Dendritic cell treated with granulocyte-macrophage colony-stimulating factor and Interleukin-4, amounts not matched to agents 40 ng/mL and 50 ng/mL, for 4 days (primary cell): ENCODE measurements at regions of chr15 and their contacts with region 1.

Region 1: DNA sequence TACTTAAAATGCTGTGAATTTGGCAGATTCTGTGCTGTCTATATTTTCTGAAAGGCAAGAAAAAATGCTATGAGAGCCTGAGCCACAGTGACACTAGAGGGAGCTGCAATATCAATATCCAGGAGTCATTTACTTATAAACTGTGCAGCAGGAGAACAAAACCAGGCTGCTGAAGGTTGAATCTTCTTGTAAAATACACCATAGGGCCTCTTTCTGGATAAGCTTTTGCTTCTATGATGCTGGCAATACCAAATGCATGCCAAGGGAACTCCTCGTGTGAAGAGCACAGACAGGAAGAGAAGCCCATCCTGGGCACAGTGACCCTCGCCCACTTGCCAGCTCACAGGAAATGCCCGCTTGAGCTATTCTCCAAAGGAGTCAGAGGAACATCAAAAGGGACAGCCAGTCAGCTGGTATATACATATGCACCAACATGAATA is 48.0 kb upstream of the TSPAN3 start:
- H3K4me3 Mint-ChIP-seq: no peak overlapping the region
- H3K27ac Mint-ChIP-seq: no peak overlapping the region
- H3K4me1 Mint-ChIP-seq: peaks cover 6% of the 10 kb centered on the region
- H3K27me3 Mint-ChIP-seq: no peaks in the 10 kb centered on the region

Region 2: DNA sequence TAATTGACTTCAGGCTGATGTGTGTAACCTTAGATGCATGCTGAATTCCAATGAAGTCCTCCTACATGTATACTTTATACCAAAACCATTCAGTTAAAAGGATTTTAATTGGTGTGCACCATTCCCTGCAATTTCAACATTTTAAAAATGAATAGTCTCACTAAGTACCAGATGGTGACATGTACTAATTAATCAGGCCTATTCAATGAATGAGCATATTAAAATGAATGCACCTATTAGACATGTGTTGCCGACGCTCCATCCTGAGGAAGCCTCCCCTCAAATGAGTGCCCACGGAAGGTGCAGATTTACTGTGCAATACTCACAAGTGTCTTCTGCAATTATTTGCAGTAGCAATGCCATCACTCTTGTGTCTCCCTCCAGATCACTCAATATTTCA is 76.7 kb after region 1 on chr15:
- intact Hi-C with region 1: no loop called
- H3K4me3 Mint-ChIP-seq: no peak overlapping the region
- H3K27ac Mint-ChIP-seq: no peak overlapping the region
- H3K4me1 Mint-ChIP-seq: peaks cover 5% of the 10 kb centered on the region
- H3K27me3 Mint-ChIP-seq: no peaks in the 10 kb centered on the region

Region 3: GRCh38 chr15:77496710-77497103 is 377.8 kb after region 1 on chr15:
- intact Hi-C with region 1: loop called (anchors 1 kb)
- H3K4me3 Mint-ChIP-seq: no peak overlapping the region
- H3K27ac Mint-ChIP-seq: no peak overlapping the region
- H3K4me1 Mint-ChIP-seq: peaks cover 25% of the 10 kb centered on the region
- H3K27me3 Mint-ChIP-seq: peaks cover 7% of the 10 kb centered on the region

Region 4: GRCh38 chr15:77543159-77543882 is 424.4 kb after region 1 on chr15:
- intact Hi-C with region 1: loop called (anchors 1 kb)
- H3K4me3 Mint-ChIP-seq: peak overlapping the region; percentile 77
- H3K27ac Mint-ChIP-seq: peak overlapping the region; percentile 74
- H3K4me1 Mint-ChIP-seq: peaks cover 32% of the 10 kb centered on the region
- H3K27me3 Mint-ChIP-seq: peaks cover 30% of the 10 kb centered on the region